ENCODE measurements at regions of chr1 and their contacts with region 1.

Region 1: GRCh38 chr1:156533568-156534215 is 33.1 kb upstream of the MEF2D start:
- DNase-seq: no peak
- H3K4me3 ChIP-seq: no peak overlapping the region
- H3K27ac ChIP-seq: no peak overlapping the region
- H3K4me1 ChIP-seq: no peaks in the 10 kb centered on the region
- H3K27me3 ChIP-seq: no peaks in the 10 kb centered on the region
- CTCF ChIP-seq: no peak
- EP300 ChIP-seq: no peak
- POLR2A ChIP-seq: no peak

Region 2: DNA sequence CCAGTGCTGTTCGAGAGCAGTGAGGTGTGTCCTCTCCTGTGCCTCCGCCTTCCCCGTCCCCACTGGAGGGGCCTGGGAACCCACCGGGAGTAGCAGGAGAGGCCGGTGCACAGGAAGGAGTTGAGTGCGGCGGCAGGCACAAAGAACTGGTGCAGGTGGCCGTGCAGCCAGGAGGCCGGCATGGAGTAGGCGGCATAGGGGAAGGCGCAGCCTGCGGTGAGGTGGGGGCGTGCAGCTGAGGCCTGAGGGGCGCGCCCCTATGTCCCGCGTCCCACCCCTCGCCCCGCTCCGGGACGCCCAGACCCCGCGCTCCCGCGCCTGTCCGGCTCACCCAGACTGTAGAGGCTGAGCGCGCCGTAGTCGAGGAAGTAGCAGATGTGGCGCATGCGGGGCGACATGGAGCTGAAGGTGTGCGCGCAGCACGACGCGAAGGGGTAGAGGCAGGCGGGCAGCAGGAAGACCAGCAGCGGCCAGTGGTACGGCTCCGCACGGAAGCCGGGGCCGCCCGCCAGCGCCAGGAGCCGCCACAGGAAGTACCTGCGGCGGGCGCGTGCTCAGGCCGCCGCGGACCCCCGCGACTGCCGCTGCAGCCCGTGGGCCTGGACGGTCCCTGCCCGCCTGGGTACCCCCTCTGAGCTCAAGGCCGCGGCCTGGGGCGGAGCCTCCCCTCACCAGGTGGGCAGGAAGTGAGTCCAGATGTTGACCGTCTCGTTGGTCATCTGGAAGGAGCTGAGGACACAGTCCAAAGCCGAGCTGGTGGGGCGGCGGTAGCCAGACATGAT is 288.1 kb before region 1 on chr1:
- intact Hi-C with region 1: loop called in 1 of 4 experiments (anchors 5 kb)
- DNase-seq: peak in 1 of 5 donors; percentile 49
- H3K4me3 ChIP-seq: peak overlapping the region; percentile 6
- H3K27ac ChIP-seq: no peak overlapping the region
- H3K4me1 ChIP-seq: peaks cover 4% of the 10 kb centered on the region
- H3K27me3 ChIP-seq: no peaks in the 10 kb centered on the region
- CTCF ChIP-seq: no peak
- EP300 ChIP-seq: no peak
- POLR2A ChIP-seq: no peak

Region 3: DNA sequence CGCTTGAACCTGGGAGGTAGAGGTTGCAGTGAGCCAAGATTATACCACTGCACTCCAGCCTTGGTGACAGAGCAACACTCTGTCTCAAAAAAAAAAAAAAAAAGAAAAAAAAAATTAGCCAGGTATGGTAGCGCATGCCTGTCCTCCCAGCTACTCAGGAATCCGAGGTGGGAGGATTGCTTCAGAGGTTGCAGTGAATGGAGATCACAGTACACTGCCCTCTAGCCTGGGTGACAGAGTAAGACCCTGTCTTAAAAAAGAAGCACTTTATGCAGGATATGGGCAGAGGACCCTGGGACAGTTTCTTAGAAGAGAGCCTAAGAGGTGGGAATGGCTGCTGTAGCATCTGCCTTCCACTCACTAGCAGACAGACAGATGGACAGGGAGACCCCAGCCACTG is 15.7 kb after region 1 on chr1:
- intact Hi-C with region 1: no loop called
- DNase-seq: no peak
- H3K4me3 ChIP-seq: no peak overlapping the region
- H3K27ac ChIP-seq: no peak overlapping the region
- H3K4me1 ChIP-seq: no peaks in the 10 kb centered on the region
- H3K27me3 ChIP-seq: no peaks in the 10 kb centered on the region
- CTCF ChIP-seq: no peak
- EP300 ChIP-seq: no peak
- POLR2A ChIP-seq: no peak